GM12878 (cell line): ENCODE measurements at regions of chr14 and their contacts with region 1.

Region 1: DNA sequence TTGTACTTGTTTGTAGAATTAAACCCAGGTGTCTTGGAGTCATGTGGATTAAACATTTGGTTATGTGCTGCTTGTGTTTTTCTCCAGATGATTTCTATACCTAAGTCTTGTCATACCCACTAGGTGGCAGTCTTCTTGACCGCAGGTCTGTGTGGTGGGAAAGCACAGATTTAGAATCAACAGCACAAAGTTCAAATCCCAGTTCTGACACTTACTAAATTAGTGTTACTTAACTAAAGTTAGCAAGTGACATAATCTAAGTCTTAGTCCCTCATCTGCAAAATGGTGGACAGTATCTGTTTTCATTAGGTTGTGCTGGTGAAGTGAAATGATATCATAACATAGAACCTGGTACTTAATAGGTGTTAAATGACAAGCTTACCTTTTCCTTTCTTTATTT is 151.0 kb upstream of the ARHGAP5 start:
- DNase-seq: no peak
- ATAC-seq: peak; percentile 83
- H3K4me3 ChIP-seq: no peak overlapping the region
- H3K27ac ChIP-seq: no peak overlapping the region
- H3K4me1 ChIP-seq: no peaks in the 10 kb centered on the region
- H3K27me3 ChIP-seq: no peaks in the 10 kb centered on the region
- CTCF ChIP-seq: peak; percentile 61 to 65 (median 64)
- EP300 ChIP-seq: no peak
- POLR2A ChIP-seq: no peak
- RAD21 ChIP-seq: peak; percentile 63

Region 2: DNA sequence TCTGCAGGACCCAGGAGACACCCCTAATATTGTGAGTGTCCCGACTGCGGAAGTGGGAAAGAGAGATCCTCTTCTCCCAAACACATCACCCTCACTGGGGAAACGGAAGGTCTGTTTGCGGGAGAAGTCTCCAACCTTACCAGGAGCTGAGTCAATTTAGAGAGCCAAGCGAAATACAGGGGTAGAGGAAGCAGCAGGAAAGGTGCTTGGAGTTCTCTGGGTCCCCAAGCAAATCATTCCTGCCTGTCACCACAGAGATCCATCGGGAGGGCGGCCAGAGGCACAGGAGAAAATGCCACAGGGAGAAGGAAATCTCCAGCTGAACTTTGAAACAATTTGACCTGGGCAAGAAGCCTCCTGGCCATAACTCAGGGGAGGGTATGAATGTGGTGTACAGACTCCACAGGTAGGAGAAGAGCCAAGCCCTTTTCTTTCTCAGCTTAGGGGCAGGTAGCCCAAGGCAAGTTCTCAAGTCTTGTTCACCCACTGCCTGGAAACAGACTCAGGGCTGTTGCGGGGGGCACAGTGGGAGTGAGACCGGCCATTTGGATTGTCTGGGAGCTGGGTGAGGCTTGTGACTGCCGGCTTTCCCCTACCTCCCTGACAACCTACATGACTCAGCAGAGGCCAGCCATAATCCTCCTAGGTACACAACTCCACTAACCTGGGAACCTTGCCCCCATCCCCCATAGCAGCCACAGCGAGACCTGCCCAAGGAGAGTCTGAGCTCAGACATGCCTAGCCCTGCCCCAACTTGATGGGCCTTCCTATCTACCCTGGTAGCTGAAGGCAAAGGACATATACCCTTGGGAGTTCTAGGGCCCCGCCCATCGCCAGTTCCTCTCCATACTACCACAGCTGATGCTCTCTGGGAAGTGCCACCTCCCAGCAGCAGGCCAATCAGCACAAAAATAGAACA is 60.9 kb before region 1 on chr14:
- CTCF ChIA-PET with region 1: no interaction called
- POLR2A ChIA-PET with region 1: no interaction called
- RAD21 ChIA-PET with region 1: no interaction called
- SMC1A ChIA-PET with region 1: no interaction called
- in situ Hi-C with region 1: no loop called
- intact Hi-C with region 1: no loop called
- DNase-seq: no peak
- ATAC-seq: no peak
- H3K4me3 ChIP-seq: no peak overlapping the region
- H3K27ac ChIP-seq: no peak overlapping the region
- H3K4me1 ChIP-seq: no peaks in the 10 kb centered on the region
- H3K27me3 ChIP-seq: no peaks in the 10 kb centered on the region
- CTCF ChIP-seq: no peak
- EP300 ChIP-seq: no peak
- POLR2A ChIP-seq: no peak
- RAD21 ChIP-seq: no peak

Region 3: DNA sequence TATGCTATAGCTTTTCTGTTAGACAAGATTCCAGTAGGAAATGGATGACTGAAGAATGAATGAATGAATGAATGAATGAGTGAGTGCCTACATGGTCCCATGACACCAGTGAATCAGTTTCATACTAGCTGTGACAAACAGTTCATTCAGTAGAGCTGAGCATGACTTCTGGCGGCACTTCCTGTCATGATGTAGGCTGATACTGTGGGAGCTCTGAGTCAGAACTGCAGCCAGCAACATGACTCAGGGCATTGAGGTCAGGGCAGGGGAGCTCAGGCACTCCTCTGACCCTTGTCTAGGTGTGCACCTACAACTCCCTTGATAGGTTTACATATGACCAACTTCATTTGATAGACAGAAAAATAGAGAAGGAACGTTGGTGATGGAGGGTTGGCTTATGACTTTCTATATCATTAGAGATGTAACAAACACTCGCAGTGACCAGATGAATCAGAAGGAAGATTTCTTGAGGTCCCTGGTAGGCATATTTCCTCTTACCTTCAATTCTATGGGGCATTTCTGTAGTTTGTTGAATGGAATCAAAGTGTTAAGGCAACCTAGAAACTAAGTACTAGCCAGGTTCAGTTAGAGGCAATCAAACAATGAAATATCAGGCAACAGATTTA is 11.7 kb after region 1 on chr14:
- CTCF ChIA-PET with region 1: interaction called, 11 read pairs
- POLR2A ChIA-PET with region 1: no interaction called
- RAD21 ChIA-PET with region 1: interaction called, 4 read pairs
- SMC1A ChIA-PET with region 1: interaction called, 13 read pairs
- in situ Hi-C with region 1: no loop called
- intact Hi-C with region 1: no loop called
- DNase-seq: peak; percentile 55
- ATAC-seq: peak; percentile 100
- H3K4me3 ChIP-seq: no peak overlapping the region
- H3K27ac ChIP-seq: no peak overlapping the region
- H3K4me1 ChIP-seq: no peaks in the 10 kb centered on the region
- H3K27me3 ChIP-seq: no peaks in the 10 kb centered on the region
- CTCF ChIP-seq: no peak
- EP300 ChIP-seq: peak; percentile 58 to 81; a peak in 2 of 4 replicates
- POLR2A ChIP-seq: no peak
- RAD21 ChIP-seq: no peak

Region 4: GRCh38 chr14:32009976-32010863 is 84.1 kb after region 1 on chr14:
- CTCF ChIA-PET with region 1: interaction called, 12 read pairs
- POLR2A ChIA-PET with region 1: no interaction called
- RAD21 ChIA-PET with region 1: no interaction called
- SMC1A ChIA-PET with region 1: interaction called, 3 read pairs
- in situ Hi-C with region 1: no loop called
- intact Hi-C with region 1: no loop called
- DNase-seq: no peak
- ATAC-seq: no peak
- H3K4me3 ChIP-seq: no peak overlapping the region
- H3K27ac ChIP-seq: no peak overlapping the region
- H3K4me1 ChIP-seq: no peaks in the 10 kb centered on the region
- H3K27me3 ChIP-seq: no peaks in the 10 kb centered on the region
- CTCF ChIP-seq: no peak
- EP300 ChIP-seq: no peak
- POLR2A ChIP-seq: no peak
- RAD21 ChIP-seq: no peak

Region 5: GRCh38 chr14:32259368-32260013 is 333.4 kb after region 1 on chr14:
- CTCF ChIA-PET with region 1: interaction called, 175 read pairs
- POLR2A ChIA-PET with region 1: no interaction called
- RAD21 ChIA-PET with region 1: interaction called, 33 read pairs
- SMC1A ChIA-PET with region 1: interaction called, 74 read pairs
- in situ Hi-C with region 1: loop called (anchors 5 kb)
- intact Hi-C with region 1: no loop called
- DNase-seq: peak; percentile 66
- ATAC-seq: peak; percentile 90
- H3K4me3 ChIP-seq: no peak overlapping the region
- H3K27ac ChIP-seq: peak overlapping the region; percentile 69
- H3K4me1 ChIP-seq: peaks cover 24% of the 10 kb centered on the region
- H3K27me3 ChIP-seq: no peaks in the 10 kb centered on the region
- CTCF ChIP-seq: no peak
- EP300 ChIP-seq: peak; percentile 41 to 45; a peak in 2 of 4 replicates
- POLR2A ChIP-seq: no peak
- RAD21 ChIP-seq: 0 out of 2 replicates have a peak, but pooled peaks have one; percentile 6

Region 6: GRCh38 chr14:32469388-32470160 is 543.5 kb after region 1 on chr14:
- CTCF ChIA-PET with region 1: interaction called, 6 read pairs
- POLR2A ChIA-PET with region 1: no interaction called
- RAD21 ChIA-PET with region 1: no interaction called
- SMC1A ChIA-PET with region 1: no interaction called
- in situ Hi-C with region 1: no loop called
- intact Hi-C with region 1: loop called (anchors 5 kb)
- DNase-seq: no peak
- ATAC-seq: peak; percentile 51
- H3K4me3 ChIP-seq: no peak overlapping the region
- H3K27ac ChIP-seq: no peak overlapping the region
- H3K4me1 ChIP-seq: no peaks in the 10 kb centered on the region
- H3K27me3 ChIP-seq: no peaks in the 10 kb centered on the region
- CTCF ChIP-seq: peak; percentile 29 to 56 (median 31); a peak in 3 of 6 replicates
- EP300 ChIP-seq: no peak
- POLR2A ChIP-seq: no peak
- RAD21 ChIP-seq: peak; percentile 68

Region 7: GRCh38 chr14:32560209-32560857 is 634.2 kb after region 1 on chr14:
- CTCF ChIA-PET with region 1: interaction called, 9 read pairs
- POLR2A ChIA-PET with region 1: no interaction called
- RAD21 ChIA-PET with region 1: no interaction called
- SMC1A ChIA-PET with region 1: interaction called, 5 read pairs
- in situ Hi-C with region 1: no loop called
- intact Hi-C with region 1: loop called (anchors 2 kb)
- DNase-seq: no peak
- ATAC-seq: peak; percentile 85
- H3K4me3 ChIP-seq: no peak overlapping the region
- H3K27ac ChIP-seq: no peak overlapping the region
- H3K4me1 ChIP-seq: no peaks in the 10 kb centered on the region
- H3K27me3 ChIP-seq: no peaks in the 10 kb centered on the region
- CTCF ChIP-seq: peak; percentile 82 to 90 (median 87)
- EP300 ChIP-seq: no peak
- POLR2A ChIP-seq: no peak
- RAD21 ChIP-seq: peak; percentile 88